Transverse colon (tissue), 4 donors: ENCODE measurements at regions of chr1 and their contacts with region 1.

Region 1: GRCh38 chr1:12251442-12251841 is 21.6 kb downstream of the VPS13D start:
- DNase-seq: no peak
- H3K4me3 ChIP-seq: no peak overlapping the region
- H3K27ac ChIP-seq: no peak overlapping the region
- H3K4me1 ChIP-seq: no peaks in the 10 kb centered on the region
- H3K27me3 ChIP-seq: no peaks in the 10 kb centered on the region
- CTCF ChIP-seq: no peak
- EP300 ChIP-seq: no peak
- POLR2A ChIP-seq: no peak

Region 2: GRCh38 chr1:13228343-13228781 is 976.9 kb after region 1 on chr1:
- in situ Hi-C with region 1: loop called in 1 of 4 experiments (anchors 25 kb)
- intact Hi-C with region 1: no loop called
- DNase-seq: peak; percentile 31
- H3K4me3 ChIP-seq: no peak overlapping the region
- H3K27ac ChIP-seq: no peak overlapping the region
- H3K4me1 ChIP-seq: no peaks in the 10 kb centered on the region
- H3K27me3 ChIP-seq: peaks cover 5% of the 10 kb centered on the region
- CTCF ChIP-seq: peak in 3 of 5 experiments; percentile 7 to 41 (median 22)
- EP300 ChIP-seq: no peak
- POLR2A ChIP-seq: no peak